ENCODE measurements at regions of chr15 and their contacts with region 1.

Region 1: GRCh38 chr15:70097337-70098169 is at the start of gene TLE3:
- DNase-seq: peak; percentile 98 to 100 (median 99)
- ATAC-seq: peak; percentile 56 to 68 (median 60)
- H3K4me3 ChIP-seq: peak within 1 kb of the TSS; percentile 65 to 87 (median 84)
- H3K27ac ChIP-seq: peak within 1 kb of the TSS; percentile 85 to 95 (median 94)
- H3K4me1 ChIP-seq: peaks cover 23 to 55% (median 30%) of the 10 kb centered on the region in 3 donors
- H3K27me3 ChIP-seq: no peaks in the 10 kb centered on the region
- CTCF ChIP-seq: peak in 2 of 4 donors; percentile 11 to 43
- total RNA-seq, gene TLE3: 13.9 to 37.2 (median 21.7) TPM

Region 2: DNA sequence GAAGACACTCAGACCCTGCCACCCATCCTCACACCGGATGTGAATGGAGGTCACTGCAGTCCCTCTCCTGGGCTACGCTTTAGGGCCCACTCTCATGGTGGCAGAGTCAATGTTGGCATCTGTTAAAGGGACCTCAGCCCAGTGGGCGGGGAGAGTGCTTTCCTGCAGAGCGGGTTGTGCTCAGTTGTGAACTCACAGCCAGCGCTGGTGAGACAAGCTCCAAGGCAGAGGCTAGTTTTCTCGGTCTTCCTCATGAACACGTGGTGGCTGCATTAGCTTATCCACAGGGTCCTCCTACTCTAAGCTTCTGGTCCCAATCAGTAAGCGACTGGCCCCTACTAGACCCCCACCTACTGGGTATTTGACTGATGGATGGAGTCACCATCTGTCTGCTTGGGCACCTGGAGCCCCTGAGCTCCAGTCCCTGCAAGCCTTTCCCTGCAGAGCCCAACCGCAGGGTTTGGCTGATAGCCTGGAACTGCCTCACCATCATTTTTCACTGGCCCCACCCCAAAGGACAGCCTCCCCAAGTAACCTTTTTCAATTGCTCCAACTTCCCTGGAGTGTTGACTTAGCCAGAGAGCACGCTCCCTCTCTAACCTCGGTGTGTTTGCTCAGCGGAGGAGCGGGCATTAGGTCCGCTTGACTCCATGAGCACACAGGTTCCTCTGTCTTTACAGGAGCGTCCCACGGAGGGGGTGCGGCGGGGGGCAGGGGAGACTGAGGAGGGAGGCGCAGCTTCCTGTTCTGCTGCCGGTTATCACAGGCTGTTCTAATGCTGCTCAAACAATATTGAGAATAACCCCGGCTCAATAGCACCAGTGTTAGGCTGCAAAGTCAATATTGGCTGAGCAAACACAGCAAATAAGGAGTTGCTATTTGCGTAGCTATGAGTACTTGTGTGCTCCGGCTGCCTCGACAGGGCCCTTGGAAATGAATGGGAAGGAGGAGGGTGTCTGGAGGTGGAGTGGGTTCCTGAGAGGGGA is 503.3 kb before region 1 on chr15:
- intact Hi-C with region 1: loop called in 1 of 3 experiments (anchors 5 kb)
- DNase-seq: peak; percentile 81 to 95 (median 92)
- ATAC-seq: peak; percentile 77 to 88 (median 80)
- H3K4me3 ChIP-seq: no peak overlapping the region
- H3K27ac ChIP-seq: peak overlapping the region; percentile 81 to 97 (median 92)
- H3K4me1 ChIP-seq: peaks cover 40 to 61% (median 55%) of the 10 kb centered on the region in 3 donors
- H3K27me3 ChIP-seq: no peaks in the 10 kb centered on the region
- CTCF ChIP-seq: no peak

Region 3: GRCh38 chr15:69919816-69920215 is 177.7 kb before region 1 on chr15:
- intact Hi-C with region 1: no loop called
- DNase-seq: no peak
- ATAC-seq: no peak
- H3K4me3 ChIP-seq: no peak overlapping the region
- H3K27ac ChIP-seq: no peak overlapping the region
- H3K4me1 ChIP-seq: no peaks in the 10 kb centered on the region
- H3K27me3 ChIP-seq: no peaks in the 10 kb centered on the region
- CTCF ChIP-seq: no peak

Region 4: GRCh38 chr15:70447928-70448698 is 350.6 kb after region 1 on chr15:
- intact Hi-C with region 1: no loop called
- DNase-seq: peak in 2 of 6 donors; percentile 37 to 61
- ATAC-seq: peak in 2 of 4 donors; percentile 31 to 58
- H3K4me3 ChIP-seq: no peak overlapping the region
- H3K27ac ChIP-seq: no peak overlapping the region
- H3K4me1 ChIP-seq: no peaks in the 10 kb centered on the region
- H3K27me3 ChIP-seq: no peaks in the 10 kb centered on the region
- CTCF ChIP-seq: no peak

Measured in pancreas (tissue), 10 donors.